ENCODE measurements at regions of chr3 and their contacts with region 1.

Region 1: GRCh38 chr3:21747376-21747775 is 3.6 kb downstream of the ZNF385D start:
- DNase-seq: no peak
- ATAC-seq: no peak
- H3K4me3 ChIP-seq: peak overlapping the region; percentile 100
- H3K27ac ChIP-seq: peak overlapping the region in 1 of 2 donors; percentile 94
- H3K4me1 ChIP-seq: peaks cover 4 to 7% of the 10 kb centered on the region in 2 donors
- H3K27me3 ChIP-seq: no peaks in the 10 kb centered on the region

Region 2: DNA sequence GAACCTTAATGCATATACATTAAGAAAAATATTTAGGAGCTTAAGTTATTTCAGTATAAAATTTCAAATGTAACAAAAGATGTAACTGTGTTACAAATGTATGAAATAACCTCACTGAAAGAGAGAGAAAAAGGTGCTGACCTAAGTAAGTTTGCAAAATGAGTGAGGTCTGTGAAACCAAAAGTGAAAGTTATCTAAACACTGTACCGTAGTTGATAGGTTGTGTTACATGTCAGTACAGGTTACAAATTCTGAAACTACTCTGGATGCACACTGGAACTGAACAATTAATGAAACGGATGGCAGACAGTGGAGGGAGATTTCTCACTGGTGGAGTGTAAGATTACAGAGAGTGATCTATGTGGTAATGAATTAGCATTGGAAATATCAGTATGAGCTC is 417.1 kb before region 1 on chr3:
- intact Hi-C with region 1: loop called in 1 of 2 experiments (anchors 10 kb)
- DNase-seq: no peak
- ATAC-seq: no peak
- H3K4me3 ChIP-seq: no peak overlapping the region
- H3K27ac ChIP-seq: no peak overlapping the region
- H3K4me1 ChIP-seq: no peaks in the 10 kb centered on the region
- H3K27me3 ChIP-seq: no peaks in the 10 kb centered on the region

Region 3: DNA sequence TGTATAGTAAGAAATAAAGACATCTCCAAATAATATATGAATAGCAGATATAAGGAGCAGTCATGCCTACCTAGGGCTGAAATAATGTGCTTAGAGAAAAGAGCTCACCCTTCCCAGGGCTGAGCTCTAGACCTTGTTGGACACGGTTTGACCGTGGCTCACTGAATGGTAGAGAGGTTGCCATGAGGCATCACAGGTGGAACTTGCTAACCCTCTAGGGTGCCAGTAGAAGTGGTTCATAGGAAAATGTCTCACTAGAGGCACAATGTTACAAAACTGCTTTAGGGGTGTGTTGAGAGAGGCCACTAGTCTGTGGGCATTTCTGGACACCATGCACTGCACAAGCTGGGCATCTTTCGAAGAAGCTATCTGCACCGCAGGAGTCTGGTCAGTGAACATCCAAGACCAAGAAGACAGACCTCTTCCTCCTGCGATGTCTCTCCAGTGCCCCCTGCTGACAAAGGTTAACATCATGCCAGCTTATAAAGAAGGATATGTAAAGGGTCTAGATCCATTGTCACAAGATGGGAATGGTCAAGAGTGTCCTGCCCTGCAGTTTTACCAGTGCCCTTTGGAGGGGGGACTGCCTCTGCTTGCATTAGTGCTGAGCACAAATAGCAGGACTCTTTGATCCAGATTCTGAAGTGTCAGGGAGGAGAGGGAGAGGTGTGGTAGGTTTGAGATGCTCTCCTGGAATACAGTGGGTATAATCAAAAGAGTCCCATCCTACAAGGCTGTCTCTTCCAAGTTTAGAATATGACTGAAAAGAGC is 263.1 kb before region 1 on chr3:
- intact Hi-C with region 1: loop called in 1 of 2 experiments (anchors 10 kb)
- DNase-seq: peak in 1 of 2 donors; percentile 42
- ATAC-seq: peak; percentile 70
- H3K4me3 ChIP-seq: no peak overlapping the region
- H3K27ac ChIP-seq: no peak overlapping the region
- H3K4me1 ChIP-seq: peaks cover 0 to 2% of the 10 kb centered on the region in 2 donors
- H3K27me3 ChIP-seq: no peaks in the 10 kb centered on the region

Region 4: DNA sequence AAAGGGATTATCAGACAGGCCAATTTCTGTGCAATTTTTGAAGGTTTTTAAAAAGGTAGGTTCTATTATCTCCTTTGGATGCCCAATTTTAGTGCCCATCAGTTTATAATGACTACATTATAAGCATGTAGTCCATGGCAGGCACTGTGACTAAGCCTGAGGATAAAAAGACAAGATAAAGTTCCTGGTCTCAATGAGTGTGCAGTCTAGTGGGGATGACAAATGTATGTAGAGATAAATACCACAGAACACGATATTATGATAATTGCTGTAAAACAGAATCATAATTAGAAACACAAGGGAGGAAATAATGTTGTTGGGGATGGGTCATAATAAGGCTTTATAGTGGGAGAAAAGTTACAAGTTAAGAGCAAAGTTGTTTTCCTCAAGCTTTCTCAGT is 159.5 kb before region 1 on chr3:
- intact Hi-C with region 1: loop called in 1 of 2 experiments (anchors 10 kb)
- DNase-seq: no peak
- ATAC-seq: no peak
- H3K4me3 ChIP-seq: no peak overlapping the region
- H3K27ac ChIP-seq: no peak overlapping the region
- H3K4me1 ChIP-seq: peaks cover 0 to 3% of the 10 kb centered on the region in 2 donors
- H3K27me3 ChIP-seq: no peaks in the 10 kb centered on the region

Region 5: DNA sequence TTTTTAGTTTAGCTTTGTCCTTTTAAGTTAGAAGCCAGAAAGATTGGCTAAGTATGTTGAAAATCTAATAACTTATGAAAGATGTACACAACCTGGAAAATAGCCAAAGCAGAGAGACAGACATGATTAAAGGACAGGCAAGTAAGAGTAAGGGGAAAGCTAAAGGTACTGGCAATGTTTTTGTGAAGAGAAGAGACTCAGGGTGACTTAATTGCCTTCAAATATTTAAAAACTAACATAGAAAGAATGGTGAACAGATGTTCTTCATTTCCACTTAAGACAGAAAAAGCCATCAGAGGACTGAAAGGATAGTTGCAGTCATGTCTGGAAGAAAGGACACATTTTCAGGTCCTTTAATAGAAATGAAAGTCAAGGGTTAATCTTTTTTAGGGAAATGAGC is 65.2 kb before region 1 on chr3:
- intact Hi-C with region 1: loop called in 1 of 2 experiments (anchors 10 kb)
- DNase-seq: no peak
- ATAC-seq: no peak
- H3K4me3 ChIP-seq: no peak overlapping the region
- H3K27ac ChIP-seq: no peak overlapping the region
- H3K4me1 ChIP-seq: peaks cover 10 to 23% of the 10 kb centered on the region in 2 donors
- H3K27me3 ChIP-seq: no peaks in the 10 kb centered on the region

Measured in aorta (tissue), 5 donors.